ENCODE measurements at regions of chr19 and their contacts with region 1.

Region 1: GRCh38 chr19:50556282-50557008 is 11.8 kb downstream of the LRRC4B start:
- DNase-seq: peak; percentile 70 to 99
- H3K4me3 ChIP-seq: peak overlapping the region; percentile 45 to 72 (median 62)
- H3K27ac ChIP-seq: no peak overlapping the region
- H3K4me1 ChIP-seq: peaks cover 0 to 19% (median 5%) of the 10 kb centered on the region in 4 experiments; a peak in 5 of 7 replicates
- H3K27me3 ChIP-seq: peaks cover 0 to 30% (median 19%) of the 10 kb centered on the region in 4 experiments; a peak in 6 of 7 replicates
- CTCF ChIP-seq: peak; percentile 90 to 93 (median 90)
- EP300 ChIP-seq: no peak
- POLR2A ChIP-seq: no peak
- RAD21 ChIP-seq: peak; percentile 43 to 65

Region 2: GRCh38 chr19:50465986-50466771 is 90.3 kb before region 1 on chr19:
- CTCF ChIA-PET with region 1: no interaction called
- POLR2A ChIA-PET with region 1: no interaction called
- DNase-seq: peak in 1 of 2 experiments; percentile 82
- H3K4me3 ChIP-seq: no peak overlapping the region
- H3K27ac ChIP-seq: no peak overlapping the region
- H3K4me1 ChIP-seq: peaks cover 0 to 8% (median 4%) of the 10 kb centered on the region in 4 experiments; a peak in 5 of 7 replicates
- H3K27me3 ChIP-seq: no peaks in the 10 kb centered on the region; a peak in 1 of 7 replicates
- CTCF ChIP-seq: peak; percentile 62 to 85 (median 78)
- EP300 ChIP-seq: no peak
- POLR2A ChIP-seq: 0 out of 3 replicates have a peak, but pooled peaks of 1 of the 2 experiments have one; percentile 35
- RAD21 ChIP-seq: peak; percentile 38 to 47; a peak in 2 of 4 replicates

Region 3: DNA sequence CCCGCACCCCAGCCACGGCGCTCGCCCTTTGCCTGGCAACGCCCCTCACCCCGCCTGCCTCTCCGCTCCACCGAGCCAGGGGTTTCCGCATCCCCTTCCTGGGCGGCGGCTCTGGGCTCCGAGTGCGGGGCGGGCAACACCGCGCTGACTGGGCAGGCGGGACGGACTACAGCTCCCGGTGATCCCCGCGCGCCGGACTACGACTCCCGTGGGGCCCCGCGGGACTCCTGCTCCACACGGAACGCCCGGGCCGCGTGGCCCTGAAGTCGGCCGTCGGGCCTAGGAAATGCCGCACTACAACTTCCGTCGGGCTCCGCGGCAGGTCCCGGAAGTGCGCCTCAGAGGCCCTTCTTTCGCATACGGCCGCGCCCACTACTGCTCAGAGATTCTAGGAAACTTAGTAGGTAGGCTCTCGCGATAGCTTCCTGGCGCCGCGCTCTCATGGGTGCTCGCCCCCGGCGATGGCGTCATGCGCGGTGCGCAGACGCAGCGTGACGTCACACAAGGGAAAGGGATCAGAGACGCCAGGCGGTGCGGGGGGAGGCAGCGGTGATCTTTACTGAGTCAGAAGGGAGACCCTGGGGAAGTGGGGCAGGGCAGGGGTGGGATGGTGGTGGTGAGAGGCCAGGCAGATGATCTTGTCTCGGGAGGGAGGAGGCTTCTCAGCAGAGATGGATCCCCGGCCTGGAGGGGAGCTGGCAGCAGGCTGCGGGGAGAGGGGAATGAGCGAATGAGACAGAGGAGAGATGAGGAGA is 45.2 kb before region 1 on chr19 and contains the start of gene JOSD2:
- CTCF ChIA-PET with region 1: interaction called, 17 read pairs
- POLR2A ChIA-PET with region 1: interaction called, 4 read pairs
- DNase-seq: peak; percentile 91 to 94
- H3K4me3 ChIP-seq: peak within 1 kb of the TSS; percentile 42 to 62 (median 56)
- H3K27ac ChIP-seq: peak within 1 kb of the TSS; percentile 32; the same call in 1 of the 2 replicates
- H3K4me1 ChIP-seq: peaks cover 0 to 6% (median 4%) of the 10 kb centered on the region in 4 experiments; a peak in 4 of 7 replicates
- H3K27me3 ChIP-seq: peaks cover 0 to 26% (median 15%) of the 10 kb centered on the region in 4 experiments; a peak in 6 of 7 replicates
- CTCF ChIP-seq: no peak; a peak in 1 of 4 replicates
- EP300 ChIP-seq: no peak
- POLR2A ChIP-seq: no peak
- RAD21 ChIP-seq: no peak
- total RNA-seq, gene JOSD2: 1.9 and 3.6 TPM in 2 replicates

Region 4: DNA sequence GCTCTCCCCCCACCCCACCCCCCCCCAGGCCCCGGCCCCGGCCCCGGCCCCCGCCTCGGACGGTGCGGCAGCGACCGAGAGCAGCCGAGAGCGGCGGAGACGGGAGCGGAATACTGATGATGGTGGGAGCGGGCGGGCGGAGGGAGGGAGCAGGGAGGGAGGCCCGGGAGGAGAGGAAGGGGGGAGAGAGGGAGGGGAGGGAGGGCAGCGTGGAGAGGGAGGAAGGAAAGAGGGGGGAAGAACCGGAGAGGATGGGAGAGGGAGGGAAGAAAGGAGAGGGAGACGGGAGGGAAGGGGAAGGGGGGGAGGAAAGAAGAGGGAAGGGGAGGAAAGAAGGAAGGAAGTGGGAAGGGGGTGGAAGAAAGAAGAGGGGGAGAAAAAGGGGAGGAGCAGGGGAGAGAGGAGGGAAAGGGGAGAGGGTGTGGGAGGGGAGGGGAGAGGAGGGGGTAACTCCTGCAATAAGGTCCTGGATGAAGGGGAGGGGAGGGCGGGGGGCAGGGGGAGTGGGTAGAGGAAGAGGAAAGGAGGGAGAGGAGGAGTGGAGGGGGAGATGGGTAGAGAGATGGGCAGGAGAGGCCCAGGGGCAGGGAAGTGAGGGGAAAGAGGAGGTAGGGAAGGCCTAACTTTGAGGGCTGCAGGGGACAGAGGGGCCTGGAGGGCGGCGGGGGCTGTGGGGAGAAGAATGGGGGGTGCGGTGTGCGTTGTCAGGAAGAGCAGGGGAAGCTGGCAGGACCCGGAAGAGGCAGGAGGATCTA is 12.1 kb after region 1 on chr19 and contains the start of gene LRRC4B:
- CTCF ChIA-PET with region 1: interaction called, 37 read pairs
- POLR2A ChIA-PET with region 1: interaction called, 6 read pairs
- DNase-seq: peak in 1 of 2 experiments; percentile 77
- H3K4me3 ChIP-seq: peak within 1 kb of the TSS; percentile 20 to 57 (median 34); a peak in 6 of 8 replicates
- H3K27ac ChIP-seq: no peak within 1 kb of the TSS
- H3K4me1 ChIP-seq: peaks cover 0 to 30% (median 18%) of the 10 kb centered on the region in 4 experiments; a peak in 6 of 7 replicates
- H3K27me3 ChIP-seq: peaks cover 5 to 45% (median 35%) of the 10 kb centered on the region in 4 experiments
- CTCF ChIP-seq: no peak
- EP300 ChIP-seq: no peak
- POLR2A ChIP-seq: no peak
- RAD21 ChIP-seq: no peak
- total RNA-seq, gene LRRC4B: 11.5 and 13.4 TPM in 2 replicates

Region 5: DNA sequence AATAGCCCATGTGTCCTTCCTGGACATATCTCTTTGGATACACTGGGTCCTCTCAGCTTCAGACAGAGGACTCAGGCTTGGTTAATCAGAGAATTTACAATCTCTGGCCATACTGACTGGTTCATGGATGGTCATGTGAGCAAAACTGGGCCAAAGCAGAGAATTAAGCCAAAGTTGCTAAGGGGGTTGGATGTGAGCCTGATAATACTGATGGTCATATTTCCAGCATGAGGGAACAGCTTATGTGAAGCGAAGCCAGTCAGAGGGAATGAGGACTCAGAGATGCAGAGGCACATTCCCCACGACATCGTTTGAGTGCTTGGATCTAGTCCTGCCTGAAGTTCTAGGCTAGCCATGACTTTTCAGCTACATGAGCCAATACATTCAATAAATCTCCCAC is 33.7 kb after region 1 on chr19:
- CTCF ChIA-PET with region 1: interaction called, 26 read pairs
- POLR2A ChIA-PET with region 1: no interaction called
- DNase-seq: no peak
- H3K4me3 ChIP-seq: no peak overlapping the region
- H3K27ac ChIP-seq: no peak overlapping the region
- H3K4me1 ChIP-seq: no peaks in the 10 kb centered on the region
- H3K27me3 ChIP-seq: peaks cover 0 to 4% (median 0%) of the 10 kb centered on the region in 4 experiments; a peak in 4 of 7 replicates
- CTCF ChIP-seq: no peak
- EP300 ChIP-seq: no peak
- POLR2A ChIP-seq: no peak
- RAD21 ChIP-seq: no peak

Measured in H1 (cell line).